H1 (cell line): ENCODE measurements at regions of chr1 and their contacts with region 1.

Region 1: DNA sequence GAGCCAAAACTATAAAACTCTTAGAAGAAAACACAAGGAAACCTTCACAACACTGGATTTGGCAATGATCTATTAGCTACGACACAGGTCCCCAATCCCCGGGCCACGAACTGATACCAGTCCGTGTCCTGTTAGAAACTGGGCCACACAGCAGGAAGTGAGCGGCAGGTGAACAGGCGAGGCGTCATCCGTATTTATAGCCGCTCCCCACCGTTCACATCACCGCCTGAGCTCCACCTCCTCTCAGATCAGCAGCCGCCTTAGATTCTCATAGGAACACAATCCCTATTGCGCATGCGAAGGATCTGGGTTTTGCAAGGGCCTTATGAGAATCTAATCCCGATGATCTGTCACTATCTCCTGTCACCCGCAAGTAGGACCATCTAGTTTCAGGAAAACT is 11.9 kb downstream of the TFB2M start:
- DNase-seq: no peak
- H3K4me3 ChIP-seq: no peak overlapping the region
- H3K27ac ChIP-seq: no peak overlapping the region
- H3K4me1 ChIP-seq: no peaks in the 10 kb centered on the region
- H3K27me3 ChIP-seq: no peaks in the 10 kb centered on the region
- CTCF ChIP-seq: no peak
- EP300 ChIP-seq: no peak
- POLR2A ChIP-seq: no peak
- RAD21 ChIP-seq: no peak

Region 2: DNA sequence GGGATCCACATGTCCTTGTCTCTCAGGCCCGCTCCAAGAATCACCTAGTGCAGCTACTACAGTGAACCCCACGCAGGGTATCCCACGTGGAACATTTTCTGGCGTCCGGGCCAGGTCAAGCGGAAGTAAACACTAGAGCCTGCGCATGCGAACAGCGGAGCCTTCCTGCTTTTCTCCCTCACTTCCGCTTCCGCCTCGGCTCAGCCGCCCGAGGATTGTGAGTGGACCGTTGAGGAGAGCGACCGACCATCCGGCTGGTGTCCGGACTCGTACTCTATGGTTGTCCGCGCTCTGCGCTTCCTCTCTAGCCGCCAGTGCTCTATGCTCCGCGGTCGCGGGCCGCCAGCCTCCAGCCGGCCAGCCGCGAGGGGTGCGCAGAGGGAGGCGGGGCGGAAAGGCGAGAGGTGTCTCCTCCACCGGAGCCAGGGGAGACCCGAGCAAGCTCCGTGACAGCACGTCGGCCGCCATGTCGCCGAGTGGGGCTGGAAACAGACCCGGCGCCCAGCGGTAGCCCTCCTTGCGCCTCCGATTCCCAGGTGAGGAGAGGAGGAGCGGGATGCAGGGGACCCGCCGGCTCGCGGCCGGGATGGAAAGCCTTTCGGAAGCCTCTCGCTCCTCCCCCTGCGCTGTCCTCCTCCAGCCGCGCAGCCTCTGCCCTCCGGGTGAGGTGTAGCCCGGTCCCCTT is 12.1 kb after region 1 on chr1 and contains the starts of genes CNST and TFB2M:
- CTCF ChIA-PET with region 1: no interaction called
- POLR2A ChIA-PET with region 1: interaction called, 17 read pairs
- DNase-seq: peak; percentile 94 to 97
- H3K4me3 ChIP-seq: peak within 1 kb of the TSS; percentile 81 to 98 (median 96)
- H3K27ac ChIP-seq: peak within 1 kb of the TSS; percentile 66
- H3K4me1 ChIP-seq: peaks cover 0 to 5% (median 2%) of the 10 kb centered on the region in 4 experiments; a peak in 2 of 7 replicates
- H3K27me3 ChIP-seq: no peaks in the 10 kb centered on the region
- CTCF ChIP-seq: no peak
- EP300 ChIP-seq: no peak; a peak in 1 of 3 replicates
- POLR2A ChIP-seq: peak; percentile 6 to 84
- RAD21 ChIP-seq: no peak
- total RNA-seq, gene CNST: 21.3 TPM in 2 replicates
- total RNA-seq, gene TFB2M: 20.5 and 22.0 TPM in 2 replicates